Lower lobe of right lung (tissue), 2 donors: ENCODE measurements at regions of chr19 and their contacts with region 1.

Region 1: DNA sequence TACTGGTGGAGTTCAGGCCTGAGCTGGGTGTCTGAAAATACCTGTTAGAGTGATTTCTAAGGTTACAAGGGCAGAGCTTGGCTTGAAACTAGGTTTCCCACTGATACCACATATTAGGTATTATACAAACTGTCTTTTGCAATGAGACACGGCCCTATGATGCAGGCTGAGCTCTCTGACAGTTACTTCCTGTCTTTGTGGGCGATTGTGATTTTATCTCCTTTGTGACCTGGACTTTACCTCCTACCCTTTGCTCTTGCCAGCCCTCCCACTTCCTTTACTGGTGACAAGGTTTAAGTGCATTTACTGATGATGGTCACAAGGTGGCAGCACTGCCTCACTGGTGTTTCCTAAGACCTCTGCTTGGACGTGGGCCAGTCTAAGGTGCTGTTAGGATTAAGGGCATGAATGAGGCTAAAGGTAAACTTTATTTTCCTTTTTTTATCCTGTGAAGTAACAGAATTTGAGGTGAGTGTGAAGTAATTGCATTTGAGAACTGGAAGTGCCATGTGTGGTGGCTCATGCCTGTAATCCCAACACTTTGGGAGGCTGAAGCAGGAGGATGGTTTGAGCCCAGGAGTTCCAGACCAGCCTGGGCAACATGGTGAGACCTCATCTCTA is 7.7 kb upstream of the CXCL17 start:
- DNase-seq: peak; percentile 83
- ATAC-seq: peak; percentile 94 to 97
- H3K4me3 ChIP-seq: no peak overlapping the region
- H3K27ac ChIP-seq: no peak overlapping the region
- H3K4me1 ChIP-seq: peaks cover 16% of the 10 kb centered on the region
- H3K27me3 ChIP-seq: no peaks in the 10 kb centered on the region
- CTCF ChIP-seq: peak; percentile 85

Region 2: GRCh38 chr19:42508892-42509444 is 58.5 kb after region 1 on chr19:
- intact Hi-C with region 1: no loop called
- DNase-seq: no peak
- ATAC-seq: no peak
- H3K4me3 ChIP-seq: no peak overlapping the region
- H3K27ac ChIP-seq: no peak overlapping the region
- H3K4me1 ChIP-seq: no peaks in the 10 kb centered on the region
- H3K27me3 ChIP-seq: no peaks in the 10 kb centered on the region
- CTCF ChIP-seq: no peak

Region 3: DNA sequence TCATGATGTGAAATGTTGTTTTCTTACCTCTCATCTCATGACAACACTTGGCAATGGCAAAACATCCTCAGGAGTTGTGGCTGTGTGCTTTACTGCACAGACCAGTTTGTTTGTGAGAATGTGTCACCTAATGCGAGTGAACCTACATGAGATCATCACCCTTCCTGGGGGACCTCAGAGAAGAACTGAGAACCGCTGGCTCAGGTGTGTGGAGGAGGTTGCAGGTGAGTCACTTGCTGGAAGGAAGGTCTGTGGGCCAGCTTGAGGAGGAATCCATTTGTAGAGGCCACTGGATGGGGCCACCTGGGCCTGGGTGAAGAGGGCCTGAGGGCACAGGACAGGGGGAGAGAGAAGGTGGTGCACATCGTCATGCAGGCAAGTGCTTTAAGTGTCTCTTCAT is 80.9 kb after region 1 on chr19:
- intact Hi-C with region 1: loop called (anchors 5 kb)
- DNase-seq: no peak
- ATAC-seq: no peak
- H3K4me3 ChIP-seq: no peak overlapping the region
- H3K27ac ChIP-seq: no peak overlapping the region
- H3K4me1 ChIP-seq: peaks cover 21% of the 10 kb centered on the region
- H3K27me3 ChIP-seq: no peaks in the 10 kb centered on the region
- CTCF ChIP-seq: no peak

Region 4: DNA sequence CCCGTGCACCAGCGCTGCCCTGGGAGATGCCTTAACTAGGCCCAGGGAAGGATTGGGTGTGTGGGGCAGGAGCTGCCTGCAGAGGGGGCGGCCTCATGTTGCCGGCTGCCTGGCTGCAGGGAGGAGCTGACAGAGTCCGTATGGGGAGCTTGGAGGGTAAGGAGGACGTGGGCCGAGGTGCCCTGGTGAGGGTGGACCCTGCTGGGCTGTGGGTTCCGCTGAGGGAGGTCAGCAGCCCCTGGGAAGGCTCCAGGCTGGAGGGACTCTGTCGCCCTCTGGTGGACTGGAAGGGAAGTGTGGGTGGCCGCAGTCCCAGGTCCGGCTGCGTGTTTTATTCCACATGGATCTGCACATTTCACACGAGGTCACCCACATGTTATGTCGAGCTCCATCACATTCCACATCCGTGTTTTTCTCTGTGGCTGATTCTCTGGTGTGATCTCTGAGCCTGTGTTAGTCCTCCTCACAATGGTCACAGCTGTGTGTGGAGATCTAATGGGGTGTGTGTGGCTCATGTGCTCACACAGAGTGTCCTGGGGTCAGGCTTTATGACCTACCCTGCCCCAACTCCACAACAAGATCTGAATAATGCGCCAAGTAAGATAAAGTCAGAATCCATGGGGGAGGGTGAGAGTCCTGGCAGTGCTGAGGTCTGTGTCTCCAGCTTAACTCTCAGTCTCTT is 146.1 kb after region 1 on chr19:
- intact Hi-C with region 1: no loop called
- DNase-seq: peak; percentile 59
- ATAC-seq: peak; percentile 64 to 73
- H3K4me3 ChIP-seq: no peak overlapping the region
- H3K27ac ChIP-seq: no peak overlapping the region
- H3K4me1 ChIP-seq: no peaks in the 10 kb centered on the region
- H3K27me3 ChIP-seq: peaks cover 8% of the 10 kb centered on the region
- CTCF ChIP-seq: peak; percentile 96